ENCODE measurements at regions of chr19 and their contacts with region 1.

Region 1: GRCh38 chr19:48872182-48872883 is at the start of gene PPP1R15A:
- DNase-seq: peak; percentile 98 to 100
- ATAC-seq: peak; percentile 55 to 58
- H3K4me3 ChIP-seq: peak within 1 kb of the TSS; percentile 92
- H3K27ac ChIP-seq: peak within 1 kb of the TSS; percentile 95 to 97
- H3K4me1 ChIP-seq: peaks cover 40% of the 10 kb centered on the region
- CTCF ChIP-seq: no peak
- EP300 ChIP-seq: no peak
- POLR2A ChIP-seq: peak; percentile 99
- RAD21 ChIP-seq: no peak; a peak in 1 of 5 replicates
- polyA plus RNA-seq, gene PPP1R15A: 49.0 and 74.2 TPM in 2 replicates

Region 2: DNA sequence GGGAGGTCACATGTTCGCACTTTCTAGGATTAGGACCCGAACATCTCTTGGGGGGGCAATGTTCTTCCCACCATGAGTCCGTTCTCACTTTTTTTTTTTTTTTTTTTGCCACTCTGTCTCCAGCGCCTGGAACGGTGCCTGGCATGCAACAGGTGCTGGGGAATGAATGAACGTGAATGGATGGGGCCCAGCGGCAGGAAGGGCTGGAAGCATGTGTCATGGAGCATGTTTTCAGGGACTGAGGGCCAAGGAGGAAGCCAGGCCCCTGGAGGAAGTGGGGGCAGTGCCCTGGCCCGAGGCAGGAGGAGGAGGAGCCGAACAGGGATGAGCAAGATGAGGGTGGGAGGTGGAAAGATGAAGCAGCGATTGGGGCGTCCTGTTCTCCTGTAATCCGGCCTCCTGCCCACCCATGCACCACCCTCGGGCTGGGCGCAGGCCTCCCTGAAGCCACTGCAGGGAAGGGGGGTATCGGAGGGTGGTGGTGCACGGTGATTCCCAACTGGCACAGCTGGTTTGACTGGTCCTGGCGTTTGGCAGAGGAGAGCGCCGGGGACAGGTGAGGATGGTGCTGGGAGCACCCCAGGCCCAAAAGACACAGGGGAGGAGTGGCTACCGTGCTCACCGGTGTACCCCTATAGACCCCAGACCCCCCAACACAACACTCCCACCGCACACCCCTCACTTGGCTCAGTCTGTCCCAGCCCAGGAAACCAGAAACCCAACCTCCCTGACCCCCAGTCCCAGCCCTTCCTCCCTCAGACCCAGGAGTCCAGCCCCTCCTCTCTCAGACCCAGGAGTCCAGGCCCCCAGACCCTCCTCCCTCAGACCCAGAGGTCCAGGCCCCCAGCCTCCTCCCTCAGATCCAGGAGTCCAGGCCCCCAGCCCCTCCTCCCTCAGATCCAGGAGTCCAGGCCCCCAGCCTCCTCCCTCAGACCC is 328.9 kb before region 1 on chr19:
- CTCF ChIA-PET with region 1: no interaction called
- POLR2A ChIA-PET with region 1: no interaction called
- DNase-seq: peak; percentile 69 to 78
- ATAC-seq: peak; percentile 72 to 79
- H3K4me3 ChIP-seq: no peak overlapping the region
- H3K27ac ChIP-seq: peak overlapping the region; percentile 62 to 85
- H3K4me1 ChIP-seq: peaks cover 41% of the 10 kb centered on the region
- CTCF ChIP-seq: no peak
- EP300 ChIP-seq: no peak
- POLR2A ChIP-seq: no peak
- RAD21 ChIP-seq: no peak

Region 3: GRCh38 chr19:48899781-48900476 is 27.6 kb after region 1 on chr19 and contains the start of gene NUCB1:
- CTCF ChIA-PET with region 1: interaction called, 4 read pairs
- POLR2A ChIA-PET with region 1: interaction called, 42 read pairs
- DNase-seq: peak; percentile 99 to 100
- ATAC-seq: peak; percentile 93 to 97
- H3K4me3 ChIP-seq: peak within 1 kb of the TSS; percentile 83
- H3K27ac ChIP-seq: peak within 1 kb of the TSS; percentile 87 to 90
- H3K4me1 ChIP-seq: peaks cover 20% of the 10 kb centered on the region; the same call in 2 of the 3 replicates
- CTCF ChIP-seq: no peak
- EP300 ChIP-seq: no peak
- POLR2A ChIP-seq: peak; percentile 64
- RAD21 ChIP-seq: peak; percentile 36 to 52; a peak in 2 of 5 replicates
- polyA plus RNA-seq, gene NUCB1: 58.5 and 79.5 TPM in 2 replicates

Region 4: GRCh38 chr19:48933382-48933932 is 61.1 kb after region 1 on chr19 and contains the start of gene DHDH:
- CTCF ChIA-PET with region 1: no interaction called
- POLR2A ChIA-PET with region 1: interaction called, 12 read pairs
- DNase-seq: peak; percentile 81 to 88
- ATAC-seq: peak; percentile 95 to 97
- H3K4me3 ChIP-seq: peak within 1 kb of the TSS; percentile 47
- H3K27ac ChIP-seq: peak within 1 kb of the TSS; percentile 55 to 79
- H3K4me1 ChIP-seq: peaks cover 6% of the 10 kb centered on the region; the same call in 2 of the 3 replicates
- CTCF ChIP-seq: no peak
- EP300 ChIP-seq: no peak
- POLR2A ChIP-seq: peak; percentile 61
- RAD21 ChIP-seq: no peak
- polyA plus RNA-seq, gene DHDH: 0.60 and 0.78 TPM in 2 replicates

Region 5: GRCh38 chr19:48954595-48955310 is 82.4 kb after region 1 on chr19 and contains the start of gene BAX:
- CTCF ChIA-PET with region 1: interaction called, 4 read pairs
- POLR2A ChIA-PET with region 1: interaction called, 13 read pairs
- DNase-seq: peak; percentile 99 to 100
- ATAC-seq: peak; percentile 90 to 92
- H3K4me3 ChIP-seq: peak within 1 kb of the TSS; percentile 83
- H3K27ac ChIP-seq: peak within 1 kb of the TSS; percentile 96 to 97
- H3K4me1 ChIP-seq: peaks cover 15% of the 10 kb centered on the region
- CTCF ChIP-seq: no peak
- EP300 ChIP-seq: no peak
- POLR2A ChIP-seq: peak; percentile 67
- RAD21 ChIP-seq: peak; percentile 31 to 63
- polyA plus RNA-seq, gene BAX: 120 and 134 TPM in 2 replicates